Aorta (tissue), 5 donors: ENCODE measurements at regions of chr12 and their contacts with region 1.

Region 1: DNA sequence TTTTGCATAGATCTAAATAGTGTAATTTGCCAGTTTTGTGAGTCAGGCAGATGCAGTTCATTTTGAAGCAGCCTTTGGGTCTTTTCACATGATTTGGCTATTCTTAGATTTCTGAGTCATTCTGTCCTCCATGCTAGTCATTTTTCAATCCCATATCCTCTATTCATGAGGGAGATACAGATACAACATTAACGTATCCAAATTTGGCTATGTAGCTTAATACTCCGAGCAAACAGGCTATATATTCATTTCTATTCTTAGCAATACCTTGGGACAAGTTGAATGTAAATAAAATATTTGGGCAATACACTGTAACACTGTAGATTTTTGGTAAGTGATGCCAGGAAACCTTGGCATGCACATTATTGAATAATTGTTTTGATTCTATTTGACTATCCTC is 270.7 kb upstream of the PDE3A start:
- DNase-seq: no peak
- ATAC-seq: peak; percentile 71
- H3K4me3 ChIP-seq: no peak overlapping the region
- H3K27ac ChIP-seq: peak overlapping the region in 1 of 2 donors; percentile 6
- H3K4me1 ChIP-seq: no peaks in the 10 kb centered on the region
- H3K27me3 ChIP-seq: no peaks in the 10 kb centered on the region

Region 2: DNA sequence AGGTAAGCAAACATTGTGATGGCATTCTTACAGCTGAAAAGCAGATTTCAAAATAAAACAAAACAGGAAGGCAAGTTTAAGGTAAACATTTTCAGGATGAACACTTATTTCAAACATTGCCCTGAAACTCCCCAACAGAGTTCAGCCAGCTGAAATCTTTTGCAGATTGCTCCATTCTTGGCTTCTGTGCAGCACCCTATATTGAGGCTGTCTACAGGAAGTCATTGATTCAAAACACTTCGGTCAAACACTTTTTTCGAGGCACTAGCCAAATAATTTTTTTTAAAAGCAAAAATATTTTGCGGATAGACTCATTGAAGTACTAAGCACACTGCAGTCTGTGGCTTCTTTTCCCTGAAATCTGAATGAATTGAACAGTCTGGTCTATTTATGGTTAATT is 47.4 kb before region 1 on chr12:
- intact Hi-C with region 1: loop called in 1 of 2 experiments (anchors 5 kb)
- DNase-seq: no peak
- ATAC-seq: no peak
- H3K4me3 ChIP-seq: no peak overlapping the region
- H3K27ac ChIP-seq: no peak overlapping the region
- H3K4me1 ChIP-seq: peaks cover 0 to 2% of the 10 kb centered on the region in 2 donors
- H3K27me3 ChIP-seq: no peaks in the 10 kb centered on the region

Region 3: GRCh38 chr12:20320552-20320951 is 222.9 kb after region 1 on chr12:
- intact Hi-C with region 1: no loop called
- DNase-seq: no peak
- ATAC-seq: peak; percentile 56
- H3K4me3 ChIP-seq: no peak overlapping the region
- H3K27ac ChIP-seq: no peak overlapping the region
- H3K4me1 ChIP-seq: no peaks in the 10 kb centered on the region
- H3K27me3 ChIP-seq: no peaks in the 10 kb centered on the region